Activated B cell treated with CpG ODN at 0.5 μM for 24 hours (primary cell): ENCODE measurements at regions of chr17 and their contacts with region 1.

Region 1: DNA sequence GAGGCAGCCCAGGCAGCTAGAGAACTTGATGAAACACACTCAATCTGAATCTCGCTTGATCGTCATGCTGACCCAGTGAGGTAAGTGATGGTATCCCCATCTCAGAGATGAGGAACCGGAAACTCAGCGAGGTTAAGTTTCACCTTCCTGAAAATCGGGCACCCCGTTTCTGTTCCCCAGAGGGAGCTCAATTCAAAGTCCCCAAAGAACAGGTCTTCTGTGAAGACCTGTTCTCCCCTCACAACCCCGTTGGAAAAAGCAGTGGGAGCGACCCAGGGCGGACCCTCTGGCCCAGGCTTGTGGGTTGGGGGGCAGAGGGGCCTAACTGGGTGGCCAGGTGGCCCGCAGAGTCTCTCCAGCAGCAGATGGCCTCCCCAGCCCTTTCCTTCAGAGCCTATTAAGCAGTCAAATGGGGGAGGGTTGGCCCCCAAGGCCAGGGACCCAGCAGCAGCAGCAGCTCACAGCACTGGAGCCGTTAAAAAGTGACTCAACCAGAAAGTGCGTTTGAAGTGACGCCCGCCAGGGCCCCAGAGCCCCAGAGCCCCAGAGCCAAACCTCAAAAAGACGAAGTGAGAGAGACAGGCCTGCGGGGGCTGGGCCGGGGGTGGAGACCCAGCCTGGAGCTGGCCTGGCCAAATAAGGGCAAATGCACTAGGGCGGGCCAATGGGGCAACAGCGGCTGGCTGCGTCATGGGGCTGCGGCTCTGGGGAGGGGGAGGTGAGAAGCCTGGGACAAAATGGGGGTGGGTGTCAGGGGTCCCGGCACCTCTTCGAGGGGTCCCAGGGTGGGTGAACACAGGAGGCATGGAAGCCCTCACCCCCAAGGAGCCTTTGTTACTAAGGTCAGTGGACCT is 9.2 kb upstream of the TSPOAP1 start:
- DNase-seq: peak; percentile 84
- ATAC-seq: peak; percentile 63
- H3K4me3 Mint-ChIP-seq: peak overlapping the region; percentile 100
- H3K27ac Mint-ChIP-seq: peak overlapping the region; percentile 99
- H3K4me1 Mint-ChIP-seq: peaks cover 97% of the 10 kb centered on the region
- H3K27me3 Mint-ChIP-seq: no peaks in the 10 kb centered on the region
- CTCF ChIP-seq: no peak

Region 2: GRCh38 chr17:57629470-57629869 is 708.4 kb before region 1 on chr17:
- CTCF ChIA-PET with region 1: no interaction called
- POLR2A ChIA-PET with region 1: no interaction called
- intact Hi-C with region 1: loop called (anchors 5 kb)
- DNase-seq: peak; percentile 54
- ATAC-seq: peak; percentile 91
- H3K4me3 Mint-ChIP-seq: peak overlapping the region; percentile 57
- H3K27ac Mint-ChIP-seq: peak overlapping the region; percentile 83
- H3K4me1 Mint-ChIP-seq: peaks cover 66% of the 10 kb centered on the region
- H3K27me3 Mint-ChIP-seq: no peaks in the 10 kb centered on the region
- CTCF ChIP-seq: no peak

Region 3: GRCh38 chr17:58352014-58352842 is 14.4 kb after region 1 on chr17 and contains the start of gene SUPT4H1:
- CTCF ChIA-PET with region 1: interaction called, 15 read pairs
- POLR2A ChIA-PET with region 1: interaction called, 3,007 read pairs
- intact Hi-C with region 1: loop called (anchors 1 kb)
- DNase-seq: peak; percentile 91
- ATAC-seq: peak; percentile 92
- H3K4me3 Mint-ChIP-seq: peak within 1 kb of the TSS; percentile 100
- H3K27ac Mint-ChIP-seq: peak within 1 kb of the TSS; percentile 97
- H3K4me1 Mint-ChIP-seq: peaks cover 49% of the 10 kb centered on the region
- H3K27me3 Mint-ChIP-seq: no peaks in the 10 kb centered on the region
- CTCF ChIP-seq: no peak
- total RNA-seq, gene SUPT4H1: 90.2 and 100 TPM in 2 replicates

Region 4: DNA sequence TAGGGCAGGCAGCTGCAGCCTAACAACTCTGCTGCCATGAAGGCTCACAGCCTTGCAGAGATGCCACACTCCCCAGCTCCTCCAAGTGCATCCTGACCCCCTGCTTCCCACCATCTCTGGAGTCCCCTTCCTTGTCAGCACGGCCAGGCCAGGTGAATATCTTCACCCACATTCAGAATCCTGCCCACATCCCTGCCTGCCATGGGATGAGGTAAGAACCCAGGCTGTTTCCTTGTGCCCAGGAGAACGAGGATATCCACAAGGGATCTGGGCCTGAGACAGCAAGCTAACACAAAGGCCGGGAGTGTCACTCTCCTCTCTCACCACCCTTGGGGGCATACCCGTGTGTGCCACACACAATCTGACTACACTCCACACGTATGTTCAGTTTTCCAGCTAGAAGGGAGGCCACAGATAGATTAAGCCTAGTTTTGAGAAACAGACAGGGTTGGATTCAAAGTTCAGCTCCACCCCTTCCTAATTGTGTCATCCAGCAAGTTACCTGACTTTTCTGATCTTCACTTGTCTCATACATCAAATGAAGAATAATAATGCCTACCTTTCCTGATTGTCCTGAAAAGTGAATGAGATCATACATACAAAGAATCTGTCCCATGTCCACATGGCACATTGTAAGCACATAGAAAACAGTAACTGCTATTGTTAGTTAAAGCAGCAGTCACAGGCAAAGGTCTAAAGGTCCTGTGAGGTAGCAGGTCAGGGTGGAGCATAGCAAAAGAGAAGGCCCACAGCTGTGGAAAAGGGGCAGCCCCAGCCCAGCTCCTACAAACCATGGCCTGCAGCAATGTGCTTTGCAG is 31.6 kb after region 1 on chr17:
- CTCF ChIA-PET with region 1: no interaction called
- POLR2A ChIA-PET with region 1: interaction called, 126 read pairs
- intact Hi-C with region 1: no loop called
- DNase-seq: no peak
- ATAC-seq: peak; percentile 66
- H3K4me3 Mint-ChIP-seq: no peak overlapping the region
- H3K27ac Mint-ChIP-seq: peak overlapping the region; percentile 51
- H3K4me1 Mint-ChIP-seq: peaks cover 42% of the 10 kb centered on the region
- H3K27me3 Mint-ChIP-seq: no peaks in the 10 kb centered on the region
- CTCF ChIP-seq: no peak

Region 5: GRCh38 chr17:59155439-59156182 is 817.8 kb after region 1 on chr17 and contains the start of gene PRR11:
- CTCF ChIA-PET with region 1: no interaction called
- POLR2A ChIA-PET with region 1: interaction called, 4 read pairs
- intact Hi-C with region 1: loop called (anchors 10 kb)
- DNase-seq: peak; percentile 65
- ATAC-seq: peak; percentile 88
- H3K4me3 Mint-ChIP-seq: no peak within 1 kb of the TSS
- H3K27ac Mint-ChIP-seq: no peak within 1 kb of the TSS
- H3K4me1 Mint-ChIP-seq: peaks cover 16% of the 10 kb centered on the region
- H3K27me3 Mint-ChIP-seq: no peaks in the 10 kb centered on the region
- CTCF ChIP-seq: no peak
- total RNA-seq, gene PRR11: 2.4 and 4.8 TPM in 2 replicates